ENCODE measurements at regions of chr6 and their contacts with region 1.

Region 1: DNA sequence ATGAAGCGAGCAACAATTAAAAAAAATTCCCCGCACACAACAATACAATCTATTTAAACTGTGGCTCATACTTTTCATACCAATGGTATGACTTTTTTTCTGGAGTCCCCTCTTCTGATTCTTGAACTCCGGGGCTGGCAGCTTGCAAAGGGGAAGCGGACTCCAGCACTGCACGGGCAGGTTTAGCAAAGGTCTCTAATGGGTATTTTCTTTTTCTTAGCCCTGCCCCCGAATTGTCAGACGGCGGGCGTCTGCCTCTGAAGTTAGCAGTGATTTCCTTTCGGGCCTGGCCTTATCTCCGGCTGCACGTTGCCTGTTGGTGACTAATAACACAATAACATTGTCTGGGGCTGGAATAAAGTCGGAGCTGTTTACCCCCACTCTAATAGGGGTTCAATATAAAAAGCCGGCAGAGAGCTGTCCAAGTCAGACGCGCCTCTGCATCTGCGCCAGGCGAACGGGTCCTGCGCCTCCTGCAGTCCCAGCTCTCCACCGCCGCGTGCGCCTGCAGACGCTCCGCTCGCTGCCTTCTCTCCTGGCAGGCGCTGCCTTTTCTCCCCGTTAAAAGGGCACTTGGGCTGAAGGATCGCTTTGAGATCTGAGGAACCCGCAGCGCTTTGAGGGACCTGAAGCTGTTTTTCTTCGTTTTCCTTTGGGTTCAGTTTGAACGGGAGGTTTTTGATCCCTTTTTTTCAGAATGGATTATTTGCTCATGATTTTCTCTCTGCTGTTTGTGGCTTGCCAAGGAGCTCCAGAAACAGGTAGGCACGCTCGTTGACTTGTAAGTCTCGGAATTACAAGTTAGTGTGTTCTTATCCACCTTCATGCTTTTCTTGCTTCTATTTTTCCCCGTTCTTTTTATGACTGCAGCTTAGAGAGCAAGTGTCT is at the start of gene EDN1:
- DNase-seq: peak; percentile 85 to 99
- H3K4me3 ChIP-seq: peak within 1 kb of the TSS; percentile 72
- H3K27ac ChIP-seq: peak within 1 kb of the TSS; percentile 92
- H3K4me1 ChIP-seq: peaks cover 66% of the 10 kb centered on the region
- H3K27me3 ChIP-seq: no peaks in the 10 kb centered on the region
- CTCF ChIP-seq: peak; percentile 45; the same call in 1 of the 2 replicates
- total RNA-seq, gene EDN1: 3.3 and 5.9 TPM in 2 replicates

Region 2: DNA sequence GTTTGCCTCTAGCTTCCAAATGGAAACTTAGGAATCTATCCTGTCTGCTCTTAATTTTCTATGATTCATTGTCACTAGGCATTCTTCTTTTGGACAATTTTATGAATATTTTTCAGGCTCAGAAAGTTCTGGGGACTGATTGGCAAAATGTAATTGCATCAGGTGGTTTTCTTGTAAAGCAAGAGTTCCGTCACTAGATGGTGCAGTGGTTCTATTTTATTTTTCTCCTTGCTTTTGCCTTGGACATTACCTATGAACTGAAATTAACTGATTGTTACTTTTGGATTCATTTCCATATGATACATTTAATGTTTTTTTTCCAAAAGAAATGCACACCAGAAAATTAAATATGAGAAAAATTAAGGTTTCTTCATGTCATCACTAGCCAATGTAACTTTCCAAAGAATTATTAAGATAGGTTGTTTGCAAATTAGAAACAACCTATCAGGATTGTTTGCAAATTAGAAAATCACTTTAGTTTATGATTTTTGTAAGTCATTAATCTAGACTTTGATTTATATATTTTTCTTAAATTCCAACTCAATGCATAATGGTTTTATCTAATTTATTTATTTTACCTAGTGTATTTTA is 704.7 kb before region 1 on chr6:
- CTCF ChIA-PET with region 1: no interaction called
- POLR2A ChIA-PET with region 1: interaction called, 29 read pairs
- intact Hi-C with region 1: loop called (anchors 1 kb)
- DNase-seq: peak; percentile 18 to 59
- H3K4me3 ChIP-seq: no peak overlapping the region
- H3K27ac ChIP-seq: no peak overlapping the region
- H3K4me1 ChIP-seq: peaks cover 14% of the 10 kb centered on the region
- H3K27me3 ChIP-seq: no peaks in the 10 kb centered on the region
- CTCF ChIP-seq: peak; percentile 95

Region 3: GRCh38 chr6:11700118-11700718 is 590.0 kb before region 1 on chr6:
- CTCF ChIA-PET with region 1: no interaction called
- POLR2A ChIA-PET with region 1: no interaction called
- intact Hi-C with region 1: loop called (anchors 2 kb)
- DNase-seq: peak in 1 of 2 experiments; percentile 59
- H3K4me3 ChIP-seq: no peak overlapping the region
- H3K27ac ChIP-seq: no peak overlapping the region
- H3K4me1 ChIP-seq: no peaks in the 10 kb centered on the region
- H3K27me3 ChIP-seq: no peaks in the 10 kb centered on the region
- CTCF ChIP-seq: peak; percentile 73

Region 4: GRCh38 chr6:12137480-12137879 is 152.7 kb before region 1 on chr6:
- CTCF ChIA-PET with region 1: interaction called, 10 read pairs
- POLR2A ChIA-PET with region 1: no interaction called
- intact Hi-C with region 1: no loop called
- DNase-seq: peak; percentile 44 to 58
- H3K4me3 ChIP-seq: no peak overlapping the region
- H3K27ac ChIP-seq: peak overlapping the region; percentile 60
- H3K4me1 ChIP-seq: peaks cover 18% of the 10 kb centered on the region
- H3K27me3 ChIP-seq: no peaks in the 10 kb centered on the region
- CTCF ChIP-seq: no peak

Region 5: GRCh38 chr6:12241493-12242175 is 48.5 kb before region 1 on chr6:
- CTCF ChIA-PET with region 1: interaction called, 5 read pairs
- POLR2A ChIA-PET with region 1: no interaction called
- intact Hi-C with region 1: loop called (anchors 1 kb)
- DNase-seq: peak; percentile 31 to 100
- H3K4me3 ChIP-seq: no peak overlapping the region
- H3K27ac ChIP-seq: peak overlapping the region; percentile 64
- H3K4me1 ChIP-seq: peaks cover 19% of the 10 kb centered on the region
- H3K27me3 ChIP-seq: no peaks in the 10 kb centered on the region
- CTCF ChIP-seq: no peak

Region 6: DNA sequence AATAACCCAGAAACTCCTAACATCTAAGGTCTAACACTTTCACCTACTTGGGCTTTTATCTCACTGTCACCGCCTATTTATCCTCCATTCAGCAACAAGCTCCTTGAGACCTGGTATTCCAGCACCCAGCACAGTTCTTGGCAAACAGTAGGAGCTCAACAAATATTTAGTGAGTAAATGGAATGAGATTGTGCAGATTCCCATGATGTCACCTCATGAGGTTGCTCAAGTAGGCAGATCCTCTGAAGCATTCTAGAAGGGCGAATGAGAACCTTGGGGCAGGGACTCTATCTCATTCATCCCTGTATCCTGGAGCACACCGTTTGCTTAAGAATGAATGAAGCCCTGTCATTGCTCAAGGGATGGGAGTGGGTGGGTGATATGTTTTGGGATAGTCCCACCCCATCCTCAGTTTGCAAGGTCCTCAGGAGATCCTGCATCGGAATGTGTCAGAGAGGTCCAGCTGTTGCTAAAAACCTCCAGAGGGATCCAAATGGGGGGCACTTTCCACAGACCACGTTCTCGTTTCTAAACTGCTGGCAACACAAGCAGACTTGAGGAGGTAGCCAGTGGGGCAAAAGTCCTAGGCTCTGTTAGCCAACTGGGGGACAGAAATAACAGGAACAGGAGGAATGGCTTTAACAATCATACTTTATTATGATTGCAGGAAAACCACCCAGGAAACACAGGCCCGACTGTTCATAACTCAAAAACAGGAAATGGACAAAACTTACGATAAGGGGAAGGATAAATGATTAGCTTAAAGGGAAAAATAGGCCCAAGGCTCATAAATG is 42.0 kb after region 1 on chr6:
- CTCF ChIA-PET with region 1: no interaction called
- POLR2A ChIA-PET with region 1: no interaction called
- intact Hi-C with region 1: no loop called
- DNase-seq: peak in 1 of 2 experiments; percentile 94
- H3K4me3 ChIP-seq: no peak overlapping the region
- H3K27ac ChIP-seq: peak overlapping the region; percentile 34
- H3K4me1 ChIP-seq: peaks cover 56% of the 10 kb centered on the region
- H3K27me3 ChIP-seq: no peaks in the 10 kb centered on the region
- CTCF ChIP-seq: no peak

Region 7: GRCh38 chr6:12348530-12349511 is 58.6 kb after region 1 on chr6:
- CTCF ChIA-PET with region 1: interaction called, 4 read pairs
- POLR2A ChIA-PET with region 1: no interaction called
- intact Hi-C with region 1: loop called (anchors 1 kb)
- DNase-seq: peak; percentile 80 to 97
- H3K4me3 ChIP-seq: no peak overlapping the region
- H3K27ac ChIP-seq: peak overlapping the region; percentile 28
- H3K4me1 ChIP-seq: peaks cover 21% of the 10 kb centered on the region
- H3K27me3 ChIP-seq: no peaks in the 10 kb centered on the region
- CTCF ChIP-seq: no peak

Region 8: DNA sequence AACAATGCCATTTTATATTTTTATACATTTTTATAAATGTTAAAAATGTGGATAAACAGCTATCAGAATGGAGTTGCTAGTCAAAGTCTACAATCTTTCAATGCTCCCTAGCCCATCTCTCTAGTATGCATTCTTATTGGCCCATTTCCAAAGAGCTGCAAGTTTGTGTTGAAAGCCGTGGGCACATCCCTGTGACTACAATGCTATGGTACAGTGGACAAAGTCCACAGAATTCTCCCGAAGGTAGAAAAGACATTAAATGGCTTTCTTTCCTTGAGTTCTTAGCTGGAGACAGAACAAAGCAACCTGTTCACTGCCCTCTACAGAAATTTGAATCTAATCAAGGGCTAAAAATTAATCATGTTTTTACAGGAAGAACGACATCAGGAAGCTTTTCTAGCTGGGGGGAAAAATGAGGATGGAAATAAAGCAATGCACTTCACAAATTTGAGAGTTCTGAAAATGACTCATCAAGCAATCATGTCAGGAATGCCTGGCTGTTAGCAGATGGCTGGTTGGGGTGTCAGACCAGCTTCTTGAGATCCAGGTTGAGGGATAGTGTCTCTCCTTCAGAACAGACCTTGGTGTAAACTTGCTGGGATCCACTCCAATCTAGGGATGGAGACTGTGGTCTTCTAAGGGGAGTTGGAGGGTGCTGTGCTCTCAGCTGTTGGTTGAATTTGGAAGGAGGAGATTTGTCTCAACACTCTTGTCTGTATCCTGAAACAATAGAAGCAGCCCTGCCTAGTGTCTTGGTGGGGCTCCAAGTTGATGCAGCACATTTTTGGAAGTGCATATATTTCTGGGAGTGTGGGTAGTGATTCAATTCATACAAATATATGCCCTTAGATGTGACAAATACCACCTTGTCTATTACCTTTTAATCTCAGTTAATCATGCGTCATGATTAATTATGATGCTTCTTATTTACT is 283.0 kb after region 1 on chr6:
- CTCF ChIA-PET with region 1: no interaction called
- POLR2A ChIA-PET with region 1: no interaction called
- intact Hi-C with region 1: loop called (anchors 1 kb)
- DNase-seq: peak; percentile 65 to 92
- H3K4me3 ChIP-seq: no peak overlapping the region; the same call in 1 of the 2 replicates
- H3K27ac ChIP-seq: peak overlapping the region; percentile 54
- H3K4me1 ChIP-seq: peaks cover 27% of the 10 kb centered on the region
- H3K27me3 ChIP-seq: no peaks in the 10 kb centered on the region
- CTCF ChIP-seq: no peak

Measured in PC-9 (cell line).